Left lung (tissue), 14 donors: ENCODE measurements at regions of chr1 and their contacts with region 1.

Region 1: GRCh38 chr1:110312188-110313121 is 26.7 kb upstream of the RBM15 start:
- DNase-seq: peak; percentile 64 to 88 (median 80)
- ATAC-seq: peak; percentile 97
- H3K4me3 ChIP-seq: no peak overlapping the region
- H3K27ac ChIP-seq: no peak overlapping the region
- H3K4me1 ChIP-seq: peaks cover 4 to 14% of the 10 kb centered on the region in 2 donors
- H3K27me3 ChIP-seq: no peaks in the 10 kb centered on the region
- CTCF ChIP-seq: peak; percentile 89 to 96

Region 2: GRCh38 chr1:110155878-110156522 is 156.5 kb before region 1 on chr1:
- intact Hi-C with region 1: no loop called
- DNase-seq: peak in 3 of 4 donors; percentile 56 to 75 (median 59)
- ATAC-seq: peak; percentile 94
- H3K4me3 ChIP-seq: no peak overlapping the region
- H3K27ac ChIP-seq: no peak overlapping the region
- H3K4me1 ChIP-seq: peaks cover 0 to 3% of the 10 kb centered on the region in 2 donors
- H3K27me3 ChIP-seq: peaks cover 12 to 80% of the 10 kb centered on the region in 2 donors
- CTCF ChIP-seq: no peak

Region 3: GRCh38 chr1:110209715-110210603 is 102.5 kb before region 1 on chr1 and contains the start of gene KCNC4:
- intact Hi-C with region 1: loop called (anchors 2 to 10 kb)
- DNase-seq: peak; percentile 52 to 97 (median 87)
- ATAC-seq: peak; percentile 92
- H3K4me3 ChIP-seq: peak within 1 kb of the TSS; percentile 65 to 79
- H3K27ac ChIP-seq: peak within 1 kb of the TSS; percentile 73 to 84
- H3K4me1 ChIP-seq: peaks cover 8 to 39% of the 10 kb centered on the region in 2 donors
- H3K27me3 ChIP-seq: peaks cover 12 to 30% of the 10 kb centered on the region in 2 donors
- CTCF ChIP-seq: no peak
- polyA plus RNA-seq, gene KCNC4: 8.5 to 16.3 (median 11.3) TPM

Region 4: GRCh38 chr1:110235834-110236682 is 76.4 kb before region 1 on chr1:
- intact Hi-C with region 1: no loop called
- DNase-seq: no peak
- ATAC-seq: peak; percentile 66
- H3K4me3 ChIP-seq: no peak overlapping the region
- H3K27ac ChIP-seq: peak overlapping the region in 1 of 2 donors; percentile 5
- H3K4me1 ChIP-seq: peaks cover 0 to 27% of the 10 kb centered on the region in 2 donors
- H3K27me3 ChIP-seq: no peaks in the 10 kb centered on the region
- CTCF ChIP-seq: no peak